Gastrocnemius medialis (tissue), 4 donors: ENCODE measurements at regions of chr13 and their contacts with region 1.

Region 1: DNA sequence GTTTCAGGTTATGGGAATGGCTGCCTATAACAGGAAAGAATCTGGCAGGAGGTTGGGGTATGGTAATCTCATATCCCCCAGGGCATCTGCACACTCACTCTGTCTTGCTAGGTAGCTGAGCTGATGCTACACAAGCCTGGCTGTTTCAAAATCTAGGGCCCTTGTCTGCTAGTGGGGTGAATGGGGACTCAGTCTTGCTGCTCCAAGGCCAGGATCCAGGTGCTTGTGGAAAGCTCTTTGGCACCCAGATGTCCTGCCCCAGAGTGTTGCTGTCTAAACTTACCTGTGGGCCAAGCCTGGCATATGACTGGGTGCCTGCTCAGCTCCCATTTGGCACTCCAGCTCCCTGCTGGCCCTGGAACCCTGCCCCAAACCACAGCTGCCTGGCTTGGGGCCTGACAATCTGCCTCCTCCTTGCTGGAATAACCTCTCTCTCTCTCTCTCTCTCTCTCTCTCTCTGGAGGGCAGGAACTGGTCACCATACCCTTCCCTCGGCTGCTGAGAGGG is 158.1 kb upstream of the TSC22D1 start:
- DNase-seq: peak; percentile 94 to 98
- ATAC-seq: peak; percentile 80 to 83
- H3K4me3 ChIP-seq: peak overlapping the region in 1 of 4 donors; percentile 24
- H3K27ac ChIP-seq: peak overlapping the region; percentile 88 to 94 (median 92)
- H3K4me1 ChIP-seq: peaks cover 38 to 42% of the 10 kb centered on the region in 2 donors
- H3K27me3 ChIP-seq: no peaks in the 10 kb centered on the region
- CTCF ChIP-seq: no peak
- POLR2A ChIP-seq: no peak

Region 2: DNA sequence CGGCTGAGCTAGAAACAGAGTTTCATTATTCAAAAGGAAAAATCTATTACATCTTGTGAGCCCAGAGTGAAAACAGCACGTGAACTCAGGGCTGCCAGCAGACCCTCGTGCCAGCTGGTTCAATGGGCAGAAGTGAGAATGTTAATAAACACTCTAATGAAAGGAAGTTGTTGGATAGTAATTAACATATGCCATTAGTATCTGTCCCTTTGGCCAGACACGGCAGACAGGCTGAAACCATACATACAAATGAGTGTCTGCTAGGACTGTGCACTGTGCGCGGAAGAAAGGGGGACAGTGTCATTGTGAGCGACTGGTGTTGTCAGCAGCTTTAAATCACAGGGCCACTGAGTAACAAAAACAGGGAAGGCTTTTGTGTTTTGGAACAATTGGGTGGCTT is 36.2 kb before region 1 on chr13:
- in situ Hi-C with region 1: no loop called
- intact Hi-C with region 1: loop called (anchors 5 kb)
- DNase-seq: no peak
- ATAC-seq: no peak
- H3K4me3 ChIP-seq: no peak overlapping the region
- H3K27ac ChIP-seq: peak overlapping the region; percentile 66 to 78 (median 76)
- H3K4me1 ChIP-seq: peaks cover 21 to 31% of the 10 kb centered on the region in 2 donors
- H3K27me3 ChIP-seq: no peaks in the 10 kb centered on the region
- CTCF ChIP-seq: no peak
- POLR2A ChIP-seq: no peak

Region 3: DNA sequence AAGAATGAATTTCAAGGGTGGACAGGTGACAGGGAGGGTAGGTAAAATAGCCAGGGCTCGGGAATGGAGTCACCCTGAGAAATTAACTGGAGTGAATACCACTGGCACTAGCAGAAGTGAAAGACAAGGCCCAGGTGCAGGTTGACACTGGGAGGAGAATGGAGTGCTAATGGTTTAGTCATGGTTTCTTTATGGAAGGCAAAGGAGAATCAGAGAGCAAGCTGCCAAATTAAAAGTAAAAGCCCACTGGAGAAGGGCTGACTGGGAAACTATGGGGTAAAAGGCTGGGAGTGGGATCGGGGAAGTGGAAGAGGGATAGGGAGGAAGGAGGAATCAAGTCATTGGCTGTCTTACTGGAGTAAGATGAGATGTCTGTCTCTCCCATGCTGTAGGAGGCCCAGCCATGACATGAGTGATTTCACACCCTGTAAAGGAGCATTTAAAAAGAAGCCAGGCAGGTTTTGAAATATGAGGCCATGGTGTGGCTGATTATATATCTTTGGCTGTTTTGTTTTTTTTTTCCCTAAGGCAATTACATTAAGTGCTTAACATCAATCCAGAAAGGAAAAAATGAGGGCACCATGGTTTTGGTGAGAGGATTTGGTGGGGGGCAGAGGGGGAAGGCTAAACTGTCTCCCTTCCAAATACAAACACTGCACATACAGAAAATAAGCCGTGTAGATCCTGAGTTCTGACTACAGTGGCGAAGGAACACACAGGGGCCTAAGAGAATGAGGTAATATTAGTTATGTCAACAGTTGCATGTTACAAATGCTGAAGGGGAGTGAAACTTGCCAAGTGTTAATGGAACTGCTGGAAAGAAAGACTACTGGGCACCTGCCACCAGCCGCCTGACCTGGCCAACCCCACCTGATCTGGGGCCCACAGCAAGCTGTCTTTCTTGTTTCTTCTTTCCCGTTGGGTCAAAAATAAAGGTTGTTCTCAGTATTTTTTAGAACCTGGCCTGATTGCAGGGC is 25.4 kb after region 1 on chr13:
- in situ Hi-C with region 1: no loop called
- intact Hi-C with region 1: loop called (anchors 1 kb)
- DNase-seq: peak; percentile 68 to 86
- ATAC-seq: peak; percentile 81 to 86
- H3K4me3 ChIP-seq: peak overlapping the region in 3 of 4 donors; percentile 30 to 36 (median 33)
- H3K27ac ChIP-seq: peak overlapping the region; percentile 89 to 96 (median 96)
- H3K4me1 ChIP-seq: peaks cover 32 to 47% of the 10 kb centered on the region in 2 donors
- H3K27me3 ChIP-seq: no peaks in the 10 kb centered on the region
- CTCF ChIP-seq: no peak
- POLR2A ChIP-seq: peak in 1 of 2 donors; percentile 33

Region 4: GRCh38 chr13:44868397-44868796 is 134.1 kb after region 1 on chr13:
- in situ Hi-C with region 1: loop called in 1 of 4 experiments (anchors 10 kb)
- intact Hi-C with region 1: loop called (anchors 1 kb)
- DNase-seq: no peak
- ATAC-seq: no peak
- H3K4me3 ChIP-seq: no peak overlapping the region
- H3K27ac ChIP-seq: peak overlapping the region; percentile 86 to 95 (median 94)
- H3K4me1 ChIP-seq: peaks cover 32 to 34% of the 10 kb centered on the region in 2 donors
- H3K27me3 ChIP-seq: no peaks in the 10 kb centered on the region
- CTCF ChIP-seq: no peak
- POLR2A ChIP-seq: no peak

Region 5: DNA sequence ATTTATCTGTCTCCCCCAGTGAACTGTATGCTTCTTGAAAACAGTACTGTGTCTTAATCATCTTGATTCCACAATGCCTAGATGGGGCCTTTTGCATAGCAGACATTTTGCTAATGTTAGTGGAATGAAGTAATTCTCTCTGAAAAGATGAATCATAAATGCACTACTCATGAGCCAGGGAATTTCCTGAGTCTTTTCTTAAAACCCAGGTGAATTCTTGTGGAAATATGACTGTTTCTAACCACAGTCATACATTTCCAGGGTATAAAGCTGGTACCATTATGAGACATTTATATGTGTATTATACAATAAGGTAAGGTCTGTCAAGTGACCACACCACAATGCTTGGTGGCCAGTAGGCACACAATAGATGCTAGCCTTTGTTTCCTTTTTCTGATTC is 472.1 kb after region 1 on chr13:
- in situ Hi-C with region 1: no loop called
- intact Hi-C with region 1: no loop called
- DNase-seq: no peak
- ATAC-seq: peak in 1 of 2 donors; percentile 20
- H3K4me3 ChIP-seq: no peak overlapping the region
- H3K27ac ChIP-seq: peak overlapping the region; percentile 69 to 79 (median 72)
- H3K4me1 ChIP-seq: peaks cover 14 to 21% of the 10 kb centered on the region in 2 donors
- H3K27me3 ChIP-seq: no peaks in the 10 kb centered on the region
- CTCF ChIP-seq: no peak
- POLR2A ChIP-seq: no peak